Activated CD4-positive, alpha-beta memory T cell treated with anti-CD3 and anti-CD28 coated beads for 36 hours (primary cell): ENCODE measurements at regions of chr12 and their contacts with region 1.

Region 1: DNA sequence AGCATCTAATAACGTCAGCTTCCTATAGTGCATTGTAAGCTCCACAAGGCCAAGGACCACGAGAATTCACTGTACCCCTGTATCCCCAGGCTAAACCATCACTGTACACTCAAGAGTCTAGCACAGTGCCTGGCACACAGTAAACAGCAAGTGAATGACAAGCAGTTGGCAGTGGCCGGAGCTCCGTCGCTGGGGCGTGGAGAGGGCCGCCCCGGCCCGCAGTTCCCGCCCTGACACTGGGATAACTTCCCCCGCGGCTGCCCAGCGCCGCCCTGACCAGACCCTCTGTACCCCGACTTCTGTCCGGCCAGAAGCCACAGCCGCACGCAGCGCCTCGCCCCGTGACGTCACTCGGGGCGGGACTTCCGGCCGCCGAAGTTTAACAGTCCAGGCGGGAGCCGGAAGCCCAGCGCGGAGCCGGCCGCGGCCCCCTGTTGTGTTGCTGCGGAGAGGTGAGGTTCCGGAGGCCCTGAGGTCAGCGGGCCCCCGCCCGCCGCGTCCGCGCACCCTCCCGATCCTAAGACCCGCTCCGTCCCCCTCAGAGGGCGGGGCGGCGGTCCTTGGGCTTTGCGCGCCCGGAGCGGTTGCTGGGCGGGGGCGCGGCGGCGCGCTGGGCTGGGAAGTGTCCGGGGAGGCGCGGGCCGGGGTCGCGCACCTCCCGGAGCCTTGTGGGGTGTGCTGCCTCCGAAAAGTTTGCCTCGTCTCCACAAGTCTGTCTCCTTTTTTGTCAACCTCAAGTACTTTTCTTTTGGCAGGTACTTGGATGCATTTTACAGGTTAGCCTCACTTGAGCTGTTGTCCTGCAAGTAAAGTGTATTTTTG is at the start of gene NEDD1:
- DNase-seq: peak; percentile 87
- H3K4me3 Mint-ChIP-seq: peak within 1 kb of the TSS; percentile 93
- H3K27ac Mint-ChIP-seq: peak within 1 kb of the TSS; percentile 96
- H3K4me1 Mint-ChIP-seq: peaks cover 39% of the 10 kb centered on the region
- H3K27me3 Mint-ChIP-seq: no peaks in the 10 kb centered on the region
- total RNA-seq, gene NEDD1: 55.4 to 57.9 TPM

Region 2: DNA sequence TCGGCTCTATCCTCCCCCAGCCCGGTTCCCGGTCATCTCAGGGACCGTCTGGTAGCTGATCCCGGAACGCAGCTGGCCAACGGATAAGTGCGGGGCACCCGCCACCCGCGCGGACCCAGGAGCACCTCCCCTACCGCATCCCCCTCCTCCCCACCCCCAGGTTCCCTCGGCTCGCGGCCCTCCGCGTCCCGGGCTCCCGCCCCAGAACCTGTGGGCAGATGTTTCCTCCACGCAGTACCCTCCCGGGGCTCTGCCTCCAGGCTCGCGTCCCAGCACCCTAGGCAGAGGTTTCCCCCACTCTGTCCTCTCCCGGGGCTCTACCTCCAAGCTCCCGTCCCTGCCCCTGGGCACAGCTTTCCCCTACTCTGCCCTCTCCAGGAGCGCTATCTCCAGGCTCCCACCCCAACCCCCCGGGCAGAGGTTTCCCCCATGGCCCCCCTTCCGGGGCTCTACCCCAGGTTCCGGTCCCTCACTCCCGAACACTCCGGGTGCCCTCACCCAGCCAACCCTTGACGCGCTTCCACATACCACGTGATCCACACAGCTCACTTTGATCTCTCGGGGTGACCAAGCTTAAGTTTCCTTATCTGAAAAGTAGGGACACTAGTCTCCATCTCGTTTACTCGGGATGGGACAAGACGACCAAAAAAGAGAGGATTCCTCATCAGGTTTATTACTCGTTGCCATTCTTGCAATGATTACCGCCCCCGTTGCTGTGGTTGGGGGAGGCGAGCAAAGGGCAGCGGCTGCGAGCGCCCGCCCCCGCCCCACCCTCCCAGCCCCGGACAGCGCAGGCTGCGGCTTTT is 964.3 kb before region 1 on chr12 and contains the start of gene CCDC38:
- CTCF ChIA-PET with region 1: no interaction called
- POLR2A ChIA-PET with region 1: no interaction called
- intact Hi-C with region 1: loop called (anchors 2 kb)
- DNase-seq: peak; percentile 90
- H3K4me3 Mint-ChIP-seq: peak within 1 kb of the TSS; percentile 83
- H3K27ac Mint-ChIP-seq: peak within 1 kb of the TSS; percentile 86
- H3K4me1 Mint-ChIP-seq: peaks cover 10% of the 10 kb centered on the region
- H3K27me3 Mint-ChIP-seq: no peaks in the 10 kb centered on the region
- total RNA-seq, gene CCDC38: 0.24 TPM in 1 of 2 experiments, not detected in the other

Region 3: GRCh38 chr12:96177013-96177412 is 730.0 kb before region 1 on chr12:
- CTCF ChIA-PET with region 1: no interaction called
- POLR2A ChIA-PET with region 1: no interaction called
- intact Hi-C with region 1: loop called (anchors 5 kb)
- DNase-seq: peak; percentile 90
- H3K4me3 Mint-ChIP-seq: peak overlapping the region; percentile 10
- H3K27ac Mint-ChIP-seq: peak overlapping the region; percentile 83
- H3K4me1 Mint-ChIP-seq: peaks cover 24% of the 10 kb centered on the region
- H3K27me3 Mint-ChIP-seq: no peaks in the 10 kb centered on the region

Region 4: GRCh38 chr12:96194971-96195844 is 711.9 kb before region 1 on chr12:
- CTCF ChIA-PET with region 1: no interaction called
- POLR2A ChIA-PET with region 1: no interaction called
- intact Hi-C with region 1: no loop called
- DNase-seq: peak; percentile 87
- H3K4me3 Mint-ChIP-seq: peak overlapping the region; percentile 93
- H3K27ac Mint-ChIP-seq: peak overlapping the region; percentile 99
- H3K4me1 Mint-ChIP-seq: peaks cover 45% of the 10 kb centered on the region
- H3K27me3 Mint-ChIP-seq: no peaks in the 10 kb centered on the region

Region 5: DNA sequence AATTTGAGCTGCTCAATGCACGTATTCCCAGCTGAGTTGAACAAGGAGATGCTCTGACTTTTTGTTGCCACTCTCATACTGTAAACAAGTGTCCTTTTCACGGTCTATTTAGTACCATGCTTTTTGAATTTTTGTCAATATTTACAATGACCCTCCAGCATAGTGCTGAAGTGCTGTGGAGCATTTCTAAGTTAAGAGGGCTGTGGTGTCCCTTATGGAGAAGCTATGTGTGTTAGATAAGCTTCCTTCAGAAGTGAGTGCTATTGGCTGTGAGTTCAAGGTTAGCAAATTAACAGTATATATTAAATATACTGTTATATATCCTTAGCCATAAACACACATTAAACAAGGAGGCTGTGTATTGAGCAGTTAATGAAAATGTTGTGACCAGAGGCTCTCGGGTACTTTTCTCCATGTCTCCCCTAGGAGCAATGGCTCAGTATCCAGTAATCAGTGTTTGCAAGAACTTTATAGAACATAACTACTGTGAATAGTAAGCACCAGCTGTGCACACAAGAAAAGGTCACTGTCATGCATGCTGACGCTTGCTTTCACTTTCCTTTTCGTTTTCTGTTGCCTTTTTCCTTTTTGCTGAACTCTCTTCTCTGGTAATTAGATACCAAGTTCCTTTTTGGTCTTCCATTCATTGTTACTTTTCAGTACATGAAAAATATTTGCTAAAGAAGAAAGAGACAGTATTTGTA is 187.2 kb before region 1 on chr12:
- CTCF ChIA-PET with region 1: no interaction called
- POLR2A ChIA-PET with region 1: no interaction called
- intact Hi-C with region 1: loop called (anchors 5 kb)
- DNase-seq: peak; percentile 24
- H3K4me3 Mint-ChIP-seq: peak overlapping the region; percentile 81
- H3K27ac Mint-ChIP-seq: peak overlapping the region; percentile 88
- H3K4me1 Mint-ChIP-seq: peaks cover 11% of the 10 kb centered on the region
- H3K27me3 Mint-ChIP-seq: no peaks in the 10 kb centered on the region

Region 6: DNA sequence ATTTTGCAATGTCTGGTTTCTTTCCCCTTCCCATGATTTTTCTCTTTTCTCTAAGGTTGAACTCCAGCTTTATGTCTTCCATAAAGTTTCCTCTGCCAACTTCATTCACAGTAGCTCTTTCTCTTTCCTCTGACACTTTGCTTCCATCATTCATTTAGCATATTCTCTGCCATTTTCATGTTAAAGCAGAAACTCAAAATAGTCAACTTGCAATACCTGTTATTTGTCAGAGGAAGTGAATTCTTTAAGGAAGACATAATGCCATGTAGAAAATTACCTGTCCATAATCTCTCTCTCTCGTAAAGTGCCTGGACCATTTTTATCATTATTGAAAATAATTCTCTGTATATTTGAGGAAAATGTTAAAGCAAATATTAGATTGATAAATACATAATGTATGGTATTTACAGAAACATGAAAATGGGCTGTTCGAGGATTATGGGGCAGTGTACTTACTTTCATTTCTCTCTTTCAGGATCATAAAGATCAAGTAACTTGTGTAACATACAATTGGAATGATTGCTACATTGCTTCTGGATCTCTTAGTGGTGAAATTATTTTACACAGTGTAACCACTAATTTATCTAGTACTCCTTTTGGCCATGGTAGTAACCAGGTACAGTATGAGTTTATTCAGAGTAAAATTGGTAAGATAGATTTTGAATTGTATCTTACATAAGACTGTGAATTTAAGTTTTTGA is 12.6 kb after region 1 on chr12:
- CTCF ChIA-PET with region 1: no interaction called
- POLR2A ChIA-PET with region 1: no interaction called
- intact Hi-C with region 1: loop called (anchors 2 kb)
- DNase-seq: no peak
- H3K4me3 Mint-ChIP-seq: no peak overlapping the region
- H3K27ac Mint-ChIP-seq: peak overlapping the region; percentile 8
- H3K4me1 Mint-ChIP-seq: peaks cover 22% of the 10 kb centered on the region
- H3K27me3 Mint-ChIP-seq: no peaks in the 10 kb centered on the region

Region 7: GRCh38 chr12:98397316-98398105 is 1490.5 kb after region 1 on chr12:
- CTCF ChIA-PET with region 1: no interaction called
- POLR2A ChIA-PET with region 1: no interaction called
- intact Hi-C with region 1: loop called (anchors 10 kb)
- DNase-seq: peak; percentile 89
- H3K4me3 Mint-ChIP-seq: peak overlapping the region; percentile 71
- H3K27ac Mint-ChIP-seq: peak overlapping the region; percentile 50
- H3K4me1 Mint-ChIP-seq: peaks cover 31% of the 10 kb centered on the region
- H3K27me3 Mint-ChIP-seq: no peaks in the 10 kb centered on the region